Sigmoid colon (tissue), 7 donors: ENCODE measurements at regions of chr9 and their contacts with region 1.

Region 1: GRCh38 chr9:34328987-34329832 is at the starts of genes KIF24 and NUDT2:
- DNase-seq: peak; percentile 99
- H3K4me3 ChIP-seq: peak within 1 kb of the TSS; percentile 62 to 75 (median 64)
- H3K27ac ChIP-seq: peak within 1 kb of the TSS; percentile 92 to 94 (median 94)
- H3K4me1 ChIP-seq: peaks cover 0 to 42% (median 21%) of the 10 kb centered on the region in 4 donors
- H3K27me3 ChIP-seq: no peaks in the 10 kb centered on the region
- CTCF ChIP-seq: no peak
- EP300 ChIP-seq: no peak
- POLR2A ChIP-seq: peak; percentile 78 to 89
- total RNA-seq, gene KIF24: 0.28 to 1.4 (median 0.51) TPM
- total RNA-seq, gene NUDT2: 12.1 to 59.9 (median 36.1) TPM

Region 2: DNA sequence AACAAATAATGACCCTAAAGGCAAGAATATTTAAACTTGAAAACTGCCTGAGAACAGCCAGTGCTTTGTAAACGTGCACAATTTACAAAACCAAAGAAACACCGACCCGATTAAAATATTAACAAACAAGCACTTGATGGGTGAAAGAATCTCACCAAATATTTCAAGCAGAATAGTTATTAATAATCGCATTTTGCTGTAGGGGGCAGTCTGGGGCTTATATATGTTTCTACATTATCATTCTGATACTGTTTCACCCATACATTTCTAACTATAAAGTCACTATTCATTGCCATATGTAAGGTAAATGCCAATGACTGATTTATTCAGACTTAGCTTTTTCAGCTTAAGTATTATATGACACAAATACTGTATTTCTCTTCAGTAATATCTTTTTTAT is 318.2 kb before region 1 on chr9:
- intact Hi-C with region 1: no loop called
- DNase-seq: no peak
- H3K4me3 ChIP-seq: no peak overlapping the region
- H3K27ac ChIP-seq: no peak overlapping the region
- H3K4me1 ChIP-seq: no peaks in the 10 kb centered on the region
- H3K27me3 ChIP-seq: no peaks in the 10 kb centered on the region
- CTCF ChIP-seq: peak in 1 of 4 experiments; percentile 15
- EP300 ChIP-seq: no peak
- POLR2A ChIP-seq: no peak

Region 3: DNA sequence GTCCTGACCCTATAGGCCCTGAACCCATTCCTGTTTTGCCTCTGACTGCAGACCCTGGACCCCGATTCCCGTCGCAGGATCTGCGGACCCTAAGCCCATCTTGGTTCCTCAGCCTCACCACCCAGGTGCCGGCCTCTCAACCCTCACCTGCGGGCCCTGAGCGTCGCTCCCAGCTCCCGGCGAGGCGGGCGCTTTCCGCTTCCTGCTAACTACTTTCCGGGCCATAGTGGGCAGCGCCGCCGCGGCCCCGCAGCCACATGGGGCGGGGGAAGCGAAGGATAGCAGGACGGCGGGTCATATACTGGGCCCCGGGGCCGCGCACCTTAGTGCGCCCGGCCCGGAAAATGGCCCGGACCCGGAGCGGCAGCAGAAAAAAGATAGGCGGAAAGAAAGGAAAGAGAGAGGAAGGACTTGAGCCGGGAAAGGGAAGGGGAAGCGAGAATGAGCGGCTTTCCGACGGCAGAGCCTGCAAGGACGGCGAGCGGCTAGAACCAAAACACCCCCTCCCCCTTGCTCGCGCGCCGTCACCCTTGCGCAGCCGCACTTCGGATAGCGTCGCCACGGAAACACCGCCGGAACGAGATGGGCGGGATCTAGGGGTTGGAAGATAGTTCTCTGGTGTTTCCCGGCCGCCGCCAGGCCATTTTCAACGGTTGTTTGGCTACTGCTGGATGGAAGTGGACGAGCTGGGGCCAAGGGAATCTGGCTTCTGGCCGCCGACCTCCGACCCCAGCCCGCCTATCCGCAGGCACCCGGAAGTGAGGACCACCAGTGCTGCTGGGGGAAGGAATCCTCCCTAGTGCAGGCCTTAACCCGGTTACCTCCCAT is 202.8 kb before region 1 on chr9 and contains the start of gene DCAF12:
- intact Hi-C with region 1: loop called (anchors 5 kb)
- DNase-seq: peak; percentile 95
- H3K4me3 ChIP-seq: peak within 1 kb of the TSS; percentile 59 to 88 (median 80)
- H3K27ac ChIP-seq: peak within 1 kb of the TSS; percentile 81 to 91 (median 89)
- H3K4me1 ChIP-seq: peaks cover 0 to 46% (median 40%) of the 10 kb centered on the region in 4 donors
- H3K27me3 ChIP-seq: no peaks in the 10 kb centered on the region
- CTCF ChIP-seq: no peak
- EP300 ChIP-seq: peak in 1 of 4 donors; percentile 31
- POLR2A ChIP-seq: peak; percentile 62 to 71
- total RNA-seq, gene DCAF12: 14.3 to 25.2 (median 20.2) TPM

Region 4: DNA sequence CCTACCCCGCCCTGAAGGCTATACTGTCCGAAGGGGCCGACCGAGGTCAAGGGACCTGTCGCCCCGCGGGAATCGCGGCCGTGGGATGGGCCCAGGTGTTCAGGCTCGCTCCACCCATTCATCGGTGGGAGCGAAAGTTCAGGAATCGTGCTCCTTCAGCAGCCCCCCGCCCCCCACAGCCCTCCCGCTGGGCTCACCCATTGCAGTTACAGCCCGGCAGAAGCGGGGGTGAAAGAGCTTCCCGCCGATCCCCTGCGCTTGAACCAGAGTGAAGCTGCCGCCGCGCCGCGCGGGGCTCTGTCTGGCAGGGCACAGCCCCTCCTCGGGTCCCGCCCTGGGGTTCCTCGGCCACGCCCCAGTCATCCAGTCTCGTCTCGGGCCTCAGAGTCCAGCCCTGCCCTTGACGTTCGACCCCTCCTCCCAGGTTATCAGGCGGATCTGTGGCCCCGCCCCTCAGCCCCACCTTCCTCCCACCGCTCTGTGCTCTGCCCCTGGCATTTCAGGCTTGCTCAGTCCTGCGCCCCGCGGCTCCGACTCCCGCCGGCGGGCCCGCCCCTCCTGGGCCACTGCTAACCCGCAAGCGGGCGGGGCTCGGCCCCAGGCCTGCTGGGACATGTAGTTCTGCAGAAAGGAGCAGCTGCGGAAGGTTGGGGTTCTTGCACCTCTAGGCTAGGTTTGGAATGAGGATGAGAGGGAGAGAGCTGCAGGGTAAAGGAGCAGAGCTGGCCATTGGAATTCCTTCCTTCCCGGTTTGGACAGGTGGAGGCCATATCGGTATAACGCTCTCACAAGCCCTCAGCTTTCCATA is 47.6 kb after region 1 on chr9 and contains the start of gene MYORG:
- intact Hi-C with region 1: loop called (anchors 1 kb)
- DNase-seq: peak; percentile 96
- H3K4me3 ChIP-seq: peak within 1 kb of the TSS; percentile 65 to 80 (median 78)
- H3K27ac ChIP-seq: peak within 1 kb of the TSS; percentile 79 to 92 (median 90)
- H3K4me1 ChIP-seq: peaks cover 0 to 73% (median 55%) of the 10 kb centered on the region in 4 donors
- H3K27me3 ChIP-seq: no peaks in the 10 kb centered on the region
- CTCF ChIP-seq: no peak
- EP300 ChIP-seq: no peak
- POLR2A ChIP-seq: peak; percentile 83 to 94
- total RNA-seq, gene MYORG: 3.9 to 23.5 (median 20.0) TPM

Region 5: DNA sequence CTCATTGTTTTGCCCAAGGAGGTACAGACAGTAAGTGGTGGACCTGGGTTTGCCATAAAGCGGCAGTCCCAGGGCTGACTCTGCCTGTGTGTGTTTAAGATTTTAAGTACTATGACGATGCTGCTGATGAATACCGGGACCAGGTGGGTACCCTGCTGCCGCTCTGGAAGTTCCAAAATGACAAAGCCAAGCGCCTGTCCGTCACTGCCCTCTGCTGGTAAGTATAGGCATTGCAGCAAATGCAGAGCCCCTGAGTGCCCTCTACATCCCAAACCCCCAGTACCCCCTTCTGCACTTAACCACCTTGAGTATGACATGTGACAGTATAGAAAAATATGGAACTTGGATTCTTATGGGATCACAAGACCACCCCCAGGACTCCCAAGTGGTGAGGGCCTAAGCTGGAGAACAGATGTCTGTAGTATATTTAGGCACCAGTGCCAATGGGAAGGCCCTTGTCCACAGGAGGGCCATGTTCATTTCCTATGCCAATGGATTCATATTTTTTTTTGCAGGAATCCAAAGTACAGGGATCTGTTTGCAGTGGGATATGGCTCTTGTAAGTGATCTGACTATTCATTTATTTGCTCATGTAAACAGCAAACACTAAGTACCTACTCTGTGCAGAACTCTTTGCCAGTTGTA is 171.5 kb after region 1 on chr9:
- intact Hi-C with region 1: loop called (anchors 5 kb)
- DNase-seq: no peak
- H3K4me3 ChIP-seq: no peak overlapping the region
- H3K27ac ChIP-seq: no peak overlapping the region
- H3K4me1 ChIP-seq: peaks cover 0 to 29% (median 25%) of the 10 kb centered on the region in 4 donors
- H3K27me3 ChIP-seq: no peaks in the 10 kb centered on the region
- CTCF ChIP-seq: peak; percentile 73 to 98 (median 90)
- EP300 ChIP-seq: no peak
- POLR2A ChIP-seq: no peak

Region 6: DNA sequence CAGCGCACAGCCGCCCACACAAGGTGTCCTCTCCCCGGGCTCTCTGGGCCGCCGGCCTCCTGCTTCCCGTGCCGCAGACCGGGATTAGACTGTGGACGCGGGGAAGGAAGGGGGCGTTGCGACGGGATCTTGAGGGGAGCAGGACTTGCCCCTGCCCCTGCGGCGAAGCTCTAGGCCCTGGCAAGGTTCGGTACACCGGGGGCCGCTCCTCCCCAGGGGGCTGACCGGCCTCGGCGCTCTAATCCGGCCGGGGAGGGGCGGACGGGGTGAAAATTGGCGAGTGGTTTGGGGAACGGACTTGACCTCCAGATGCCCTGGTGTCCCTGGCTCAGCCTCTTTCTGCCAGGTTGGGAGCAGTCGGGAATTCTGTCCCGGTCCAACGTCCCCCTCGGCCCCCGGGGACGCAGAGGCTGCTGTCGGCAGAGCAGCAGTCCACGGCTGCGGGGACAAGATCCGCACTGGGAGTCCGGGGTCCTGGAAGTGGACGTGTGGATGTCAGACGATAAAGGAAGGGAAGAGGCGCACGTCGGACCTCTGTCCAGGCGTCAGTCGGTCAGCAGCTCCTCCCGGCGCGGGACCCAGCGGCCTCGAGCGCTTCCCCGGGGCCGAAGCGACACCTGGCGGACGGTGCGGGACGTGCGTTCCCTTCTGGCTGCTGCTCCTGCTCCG is 262.2 kb after region 1 on chr9:
- intact Hi-C with region 1: loop called (anchors 2 kb)
- DNase-seq: peak; percentile 93
- H3K4me3 ChIP-seq: peak overlapping the region in 3 of 4 donors; percentile 22 to 27 (median 24)
- H3K27ac ChIP-seq: peak overlapping the region in 2 of 4 donors; percentile 25 to 56
- H3K4me1 ChIP-seq: peaks cover 0 to 54% (median 44%) of the 10 kb centered on the region in 4 donors
- H3K27me3 ChIP-seq: peaks cover 13 to 67% (median 40%) of the 10 kb centered on the region in 3 donors
- CTCF ChIP-seq: peak; percentile 84 to 90 (median 88)
- EP300 ChIP-seq: no peak
- POLR2A ChIP-seq: no peak